ENCODE measurements at regions of chr3 and their contacts with region 1.

Region 1: DNA sequence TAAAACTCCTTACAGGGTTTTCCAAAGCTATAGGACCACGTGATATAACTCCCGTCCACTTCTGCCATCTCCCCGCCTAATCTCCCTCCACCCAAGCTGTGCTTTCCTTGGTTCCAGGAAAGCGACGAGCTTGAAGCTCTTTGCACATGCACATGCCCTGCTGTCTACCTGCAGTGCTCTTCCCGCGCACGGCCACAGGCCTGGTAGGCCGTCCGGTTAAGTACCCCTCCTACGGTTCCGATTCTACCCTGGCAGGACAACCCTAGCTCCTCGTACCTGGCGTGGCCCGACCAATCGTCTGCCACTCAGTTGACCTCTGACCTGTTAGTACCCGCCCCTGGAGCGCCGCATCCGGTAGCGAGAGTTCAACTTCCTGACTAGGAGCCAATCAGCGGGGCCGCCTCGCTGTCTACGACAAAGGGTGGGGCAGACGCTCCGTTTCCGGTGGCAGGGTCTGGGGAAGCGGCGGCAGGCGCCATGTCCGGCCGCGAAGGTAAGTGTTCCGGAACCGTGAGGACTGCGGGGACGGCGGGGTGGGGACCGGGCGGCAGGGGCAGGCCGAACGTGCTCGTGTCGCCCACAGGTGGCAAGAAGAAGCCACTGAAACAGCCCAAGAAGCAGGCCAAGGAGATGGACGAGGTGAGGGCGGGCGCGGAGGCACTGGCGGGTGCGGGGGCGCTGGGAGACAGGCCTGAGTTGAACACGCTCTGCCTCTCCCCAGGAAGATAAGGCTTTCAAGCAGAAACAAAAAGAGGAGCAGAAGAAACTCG is at the starts of genes CCDC51 and TMA7:
- DNase-seq: peak; percentile 95 to 99 (median 98)
- ATAC-seq: peak; percentile 91
- H3K4me3 ChIP-seq: peak within 1 kb of the TSS; percentile 82 to 86
- H3K4me3 Mint-ChIP-seq: peak within 1 kb of the TSS; percentile 89
- H3K27ac ChIP-seq: peak within 1 kb of the TSS; percentile 95 to 98
- H3K27ac Mint-ChIP-seq: peak within 1 kb of the TSS; percentile 97
- H3K4me1 ChIP-seq: peaks cover 21% of the 10 kb centered on the region
- H3K4me1 Mint-ChIP-seq: peaks cover 37% of the 10 kb centered on the region
- H3K27me3 ChIP-seq: no peaks in the 10 kb centered on the region
- H3K27me3 Mint-ChIP-seq: no peaks in the 10 kb centered on the region
- CTCF ChIP-seq: no peak
- total RNA-seq, gene CCDC51: 2.9 to 4.7 TPM
- total RNA-seq, gene TMA7: 279 to 297 TPM

Region 2: DNA sequence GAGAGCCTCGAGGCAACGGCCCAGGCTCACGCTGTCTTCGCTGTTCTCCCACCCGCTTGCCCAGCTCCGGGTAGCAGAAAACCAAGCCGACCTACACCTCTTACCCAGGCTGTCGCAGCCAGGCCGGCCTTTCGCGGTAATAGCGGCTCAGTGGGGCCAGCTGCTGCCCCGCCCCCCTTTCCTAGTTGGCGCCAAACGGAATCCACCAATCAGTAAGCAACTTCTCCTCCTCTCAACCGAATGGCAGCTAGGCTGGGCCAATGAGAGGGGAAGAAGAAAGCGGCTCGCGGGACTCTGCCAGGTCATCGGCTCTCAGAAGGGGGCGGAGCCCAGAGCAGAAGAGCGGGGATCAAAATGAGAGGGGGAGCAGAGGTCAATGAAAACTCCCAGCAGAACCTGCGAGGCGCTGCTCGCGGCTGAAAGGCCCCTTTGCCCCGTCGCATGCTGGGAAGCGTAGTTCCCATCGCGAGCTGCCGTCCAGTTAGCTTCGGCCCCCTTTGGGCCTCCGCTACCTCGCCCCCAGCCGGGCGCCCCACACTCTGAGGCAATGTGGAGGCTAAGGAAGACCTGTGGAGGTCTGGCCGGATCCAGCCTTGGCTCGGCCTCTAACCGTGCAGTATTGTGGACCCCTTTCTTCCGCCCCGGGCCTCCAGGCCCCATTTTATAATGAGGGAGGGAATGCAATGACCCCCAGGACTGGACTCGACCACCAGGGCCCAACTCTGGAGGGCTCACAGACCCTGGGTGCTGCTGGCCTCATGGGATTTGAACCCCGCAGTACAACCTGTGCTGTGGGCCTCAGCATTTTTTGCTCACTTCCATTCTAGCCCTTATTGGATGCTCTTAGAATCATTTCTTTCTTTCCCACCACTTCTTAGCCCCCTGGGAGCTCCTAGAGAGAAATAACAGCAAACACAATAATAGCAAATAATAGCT is 251.5 kb before region 1 on chr3 and contains the start of gene CDC25A:
- CTCF ChIA-PET with region 1: interaction called, 4 read pairs
- POLR2A ChIA-PET with region 1: no interaction called
- intact Hi-C with region 1: loop called in 1 of 2 experiments (anchors 5 kb)
- DNase-seq: peak; percentile 85 to 97 (median 92)
- ATAC-seq: peak; percentile 99
- H3K4me3 ChIP-seq: peak within 1 kb of the TSS; percentile 73 to 86
- H3K4me3 Mint-ChIP-seq: peak within 1 kb of the TSS; percentile 93
- H3K27ac ChIP-seq: peak within 1 kb of the TSS in 1 of 2 experiments; percentile 68
- H3K27ac Mint-ChIP-seq: peak within 1 kb of the TSS; percentile 45
- H3K4me1 ChIP-seq: peaks cover 12% of the 10 kb centered on the region
- H3K4me1 Mint-ChIP-seq: peaks cover 14% of the 10 kb centered on the region
- H3K27me3 ChIP-seq: peaks cover 4 to 6% of the 10 kb centered on the region in 2 experiments
- H3K27me3 Mint-ChIP-seq: peaks cover 21% of the 10 kb centered on the region
- CTCF ChIP-seq: no peak
- total RNA-seq, gene CDC25A: 0.31 TPM in 1 of 2 experiments, not detected in the other

Region 3: DNA sequence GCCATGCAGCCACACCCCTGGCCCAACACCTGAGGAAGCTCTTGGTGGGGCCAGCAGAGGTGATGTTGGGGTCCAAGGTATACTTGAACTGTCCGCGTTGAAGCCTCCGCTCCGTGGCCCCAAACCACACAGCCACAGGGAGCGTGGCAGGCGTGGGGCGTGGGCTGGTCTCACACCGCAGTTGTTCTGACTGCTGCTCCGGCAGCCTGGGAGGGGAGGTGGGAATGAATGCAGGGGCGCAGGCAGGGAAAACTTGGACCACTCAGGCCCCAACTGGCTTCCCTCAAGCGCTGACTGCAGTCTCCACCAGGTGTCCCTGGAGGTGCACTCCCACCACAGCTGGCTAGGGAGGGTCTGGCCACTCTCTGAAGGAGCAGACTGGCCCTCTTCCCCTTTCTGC is 24.5 kb before region 1 on chr3:
- CTCF ChIA-PET with region 1: interaction called, 357 read pairs
- POLR2A ChIA-PET with region 1: no interaction called
- intact Hi-C with region 1: no loop called
- DNase-seq: no peak
- ATAC-seq: no peak
- H3K4me3 ChIP-seq: no peak overlapping the region
- H3K4me3 Mint-ChIP-seq: no peak overlapping the region
- H3K27ac ChIP-seq: no peak overlapping the region
- H3K27ac Mint-ChIP-seq: no peak overlapping the region
- H3K4me1 ChIP-seq: no peaks in the 10 kb centered on the region
- H3K4me1 Mint-ChIP-seq: no peaks in the 10 kb centered on the region
- H3K27me3 ChIP-seq: no peaks in the 10 kb centered on the region
- H3K27me3 Mint-ChIP-seq: no peaks in the 10 kb centered on the region
- CTCF ChIP-seq: no peak

Region 4: GRCh38 chr3:48472915-48473616 is 33.1 kb after region 1 on chr3:
- CTCF ChIA-PET with region 1: interaction called, 48 read pairs
- POLR2A ChIA-PET with region 1: interaction called, 15 read pairs
- intact Hi-C with region 1: loop called (anchors 1 kb)
- DNase-seq: peak; percentile 85 to 99 (median 92)
- ATAC-seq: peak; percentile 87
- H3K4me3 ChIP-seq: peak overlapping the region; percentile 62 to 65
- H3K4me3 Mint-ChIP-seq: peak overlapping the region; percentile 90
- H3K27ac ChIP-seq: peak overlapping the region; percentile 82 to 92
- H3K27ac Mint-ChIP-seq: peak overlapping the region; percentile 99
- H3K4me1 ChIP-seq: peaks cover 55% of the 10 kb centered on the region
- H3K4me1 Mint-ChIP-seq: peaks cover 56% of the 10 kb centered on the region
- H3K27me3 ChIP-seq: no peaks in the 10 kb centered on the region
- H3K27me3 Mint-ChIP-seq: no peaks in the 10 kb centered on the region
- CTCF ChIP-seq: no peak

Region 5: DNA sequence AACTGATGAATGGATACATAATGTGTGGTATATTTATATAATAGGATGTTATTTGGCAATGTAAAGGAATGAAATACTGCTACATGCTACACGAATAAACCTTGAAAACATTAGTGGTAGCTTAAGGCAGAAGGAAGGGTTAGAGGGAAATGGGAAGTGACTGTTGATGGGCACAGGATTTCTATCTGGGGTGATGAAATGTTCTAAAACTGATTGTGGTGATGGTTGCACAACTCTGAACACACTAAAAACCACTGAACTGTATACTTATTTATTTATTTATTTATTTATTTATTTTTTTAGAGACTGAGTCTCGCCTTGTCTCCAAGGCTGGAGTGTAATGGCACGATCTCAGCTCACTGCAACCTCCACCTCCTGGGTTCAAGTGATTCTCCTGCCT is 88.7 kb after region 1 on chr3:
- CTCF ChIA-PET with region 1: interaction called, 17 read pairs
- POLR2A ChIA-PET with region 1: interaction called, 3 read pairs
- intact Hi-C with region 1: no loop called
- DNase-seq: no peak
- ATAC-seq: no peak
- H3K4me3 ChIP-seq: no peak overlapping the region
- H3K4me3 Mint-ChIP-seq: no peak overlapping the region
- H3K27ac ChIP-seq: no peak overlapping the region
- H3K27ac Mint-ChIP-seq: no peak overlapping the region
- H3K4me1 ChIP-seq: no peaks in the 10 kb centered on the region
- H3K4me1 Mint-ChIP-seq: no peaks in the 10 kb centered on the region
- H3K27me3 ChIP-seq: no peaks in the 10 kb centered on the region
- H3K27me3 Mint-ChIP-seq: no peaks in the 10 kb centered on the region
- CTCF ChIP-seq: no peak

Region 6: DNA sequence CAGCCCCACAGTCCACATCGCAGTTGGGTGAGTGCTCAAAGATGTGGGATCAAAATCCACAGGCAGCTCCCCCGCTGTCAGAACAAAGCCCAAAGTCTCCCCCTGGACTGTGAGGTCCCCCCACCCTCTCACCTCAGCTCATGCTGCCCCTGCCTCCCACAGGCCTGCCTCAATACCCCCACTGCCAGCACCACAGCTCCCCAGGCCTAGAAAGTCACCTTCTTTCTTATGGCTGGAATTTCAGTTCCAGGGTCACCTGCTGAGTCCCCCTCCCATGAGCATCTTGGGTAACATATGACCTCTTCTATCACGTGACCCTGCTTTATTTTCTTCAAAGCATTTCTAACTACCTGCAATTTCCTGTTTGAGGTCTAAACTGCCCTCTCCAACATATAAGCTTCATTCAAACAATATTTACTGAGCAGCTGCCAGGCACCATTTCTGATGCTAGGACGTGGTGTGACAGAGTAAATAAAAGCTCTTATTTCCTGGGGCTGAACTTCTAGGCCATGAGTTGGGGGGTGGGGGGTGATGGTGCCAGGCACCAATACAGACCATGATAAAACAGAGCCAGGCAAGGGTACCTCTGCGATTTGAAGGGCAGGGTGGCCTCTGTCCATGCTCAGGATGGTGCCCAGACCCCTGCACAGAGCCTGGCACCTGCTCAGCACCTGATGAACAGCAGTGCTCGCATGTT is 184.0 kb after region 1 on chr3:
- CTCF ChIA-PET with region 1: no interaction called
- POLR2A ChIA-PET with region 1: no interaction called
- intact Hi-C with region 1: no loop called
- DNase-seq: no peak
- ATAC-seq: no peak
- H3K4me3 ChIP-seq: no peak overlapping the region
- H3K4me3 Mint-ChIP-seq: no peak overlapping the region
- H3K27ac ChIP-seq: no peak overlapping the region
- H3K27ac Mint-ChIP-seq: no peak overlapping the region
- H3K4me1 ChIP-seq: no peaks in the 10 kb centered on the region
- H3K4me1 Mint-ChIP-seq: peaks cover 10% of the 10 kb centered on the region
- H3K27me3 ChIP-seq: no peaks in the 10 kb centered on the region
- H3K27me3 Mint-ChIP-seq: no peaks in the 10 kb centered on the region
- CTCF ChIP-seq: no peak

Region 7: GRCh38 chr3:48656061-48656840 is 216.2 kb after region 1 on chr3:
- CTCF ChIA-PET with region 1: interaction called, 5 read pairs
- POLR2A ChIA-PET with region 1: no interaction called
- intact Hi-C with region 1: loop called in 1 of 2 experiments (anchors 5 kb)
- DNase-seq: peak; percentile 71 to 94 (median 83)
- ATAC-seq: peak; percentile 81
- H3K4me3 ChIP-seq: peak overlapping the region; percentile 53 to 83
- H3K4me3 Mint-ChIP-seq: peak overlapping the region; percentile 83
- H3K27ac ChIP-seq: peak overlapping the region; percentile 65 to 68
- H3K27ac Mint-ChIP-seq: peak overlapping the region; percentile 90
- H3K4me1 ChIP-seq: peaks cover 18% of the 10 kb centered on the region
- H3K4me1 Mint-ChIP-seq: peaks cover 18% of the 10 kb centered on the region
- H3K27me3 ChIP-seq: peaks cover 0 to 4% of the 10 kb centered on the region in 2 experiments
- H3K27me3 Mint-ChIP-seq: peaks cover 11% of the 10 kb centered on the region
- CTCF ChIP-seq: peak; percentile 60